ENCODE measurements at regions of chr15 and their contacts with region 1.

Region 1: GRCh38 chr15:39756806-39757522 is 25.7 kb downstream of the FSIP1 start:
- DNase-seq: peak; percentile 24
- H3K4me3 Mint-ChIP-seq: no peak overlapping the region
- H3K27ac Mint-ChIP-seq: no peak overlapping the region
- H3K4me1 Mint-ChIP-seq: no peaks in the 10 kb centered on the region
- H3K27me3 Mint-ChIP-seq: peaks cover 7% of the 10 kb centered on the region

Region 2: DNA sequence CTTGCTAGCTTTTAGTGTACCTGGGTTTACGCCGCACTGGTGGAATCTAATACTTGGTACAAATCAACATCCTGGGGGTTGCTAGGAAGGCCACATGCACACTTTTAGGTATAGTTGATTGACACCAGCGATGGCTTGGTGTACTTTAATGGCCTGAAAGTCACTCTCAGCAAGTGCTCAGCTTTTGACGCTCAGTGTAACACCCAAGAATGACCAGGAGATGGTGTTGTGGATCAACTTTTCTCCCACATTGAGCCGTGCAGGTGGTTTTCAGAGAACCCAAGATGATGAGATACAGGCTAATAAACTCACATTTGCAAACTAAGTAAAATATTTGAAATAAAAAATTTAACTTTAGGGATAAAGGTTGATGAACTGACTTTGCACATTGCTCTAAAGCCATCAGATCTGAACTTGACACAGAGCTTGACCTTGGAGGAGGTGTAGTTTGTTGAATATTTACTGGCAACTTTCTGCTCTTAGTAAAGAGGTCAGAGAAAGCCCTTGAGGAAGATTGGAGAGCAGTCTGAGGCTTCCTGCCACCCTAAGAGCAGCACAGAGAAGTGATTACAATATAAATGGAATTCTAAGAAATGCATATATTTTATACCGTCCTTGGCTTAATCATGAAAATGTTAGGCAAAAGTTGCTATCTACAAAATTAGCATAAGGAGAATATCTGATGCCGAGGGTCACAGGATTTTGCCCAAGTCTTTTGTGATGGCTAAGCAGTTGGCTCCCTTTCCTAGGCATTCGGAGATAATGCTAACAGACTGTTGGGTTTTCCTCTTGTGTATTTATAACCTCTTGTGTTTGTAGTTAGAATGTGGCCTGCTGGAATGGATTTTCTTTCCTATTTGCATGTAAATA is 1048.9 kb before region 1 on chr15:
- CTCF ChIA-PET with region 1: interaction called, 6 read pairs
- intact Hi-C with region 1: loop called (anchors 2 kb)
- DNase-seq: peak; percentile 53
- H3K4me3 Mint-ChIP-seq: no peak overlapping the region
- H3K27ac Mint-ChIP-seq: no peak overlapping the region
- H3K4me1 Mint-ChIP-seq: no peaks in the 10 kb centered on the region
- H3K27me3 Mint-ChIP-seq: no peaks in the 10 kb centered on the region

Region 3: GRCh38 chr15:39125904-39126303 is 631.1 kb before region 1 on chr15:
- CTCF ChIA-PET with region 1: interaction called, 4 read pairs
- intact Hi-C with region 1: loop called (anchors 2 kb)
- DNase-seq: peak; percentile 47
- H3K4me3 Mint-ChIP-seq: no peak overlapping the region
- H3K27ac Mint-ChIP-seq: no peak overlapping the region
- H3K4me1 Mint-ChIP-seq: no peaks in the 10 kb centered on the region
- H3K27me3 Mint-ChIP-seq: peaks cover 6% of the 10 kb centered on the region

Region 4: GRCh38 chr15:39495871-39496840 is 260.8 kb before region 1 on chr15:
- CTCF ChIA-PET with region 1: no interaction called
- intact Hi-C with region 1: no loop called
- DNase-seq: no peak
- H3K4me3 Mint-ChIP-seq: no peak overlapping the region
- H3K27ac Mint-ChIP-seq: no peak overlapping the region
- H3K4me1 Mint-ChIP-seq: no peaks in the 10 kb centered on the region
- H3K27me3 Mint-ChIP-seq: peaks cover 5% of the 10 kb centered on the region

Region 5: DNA sequence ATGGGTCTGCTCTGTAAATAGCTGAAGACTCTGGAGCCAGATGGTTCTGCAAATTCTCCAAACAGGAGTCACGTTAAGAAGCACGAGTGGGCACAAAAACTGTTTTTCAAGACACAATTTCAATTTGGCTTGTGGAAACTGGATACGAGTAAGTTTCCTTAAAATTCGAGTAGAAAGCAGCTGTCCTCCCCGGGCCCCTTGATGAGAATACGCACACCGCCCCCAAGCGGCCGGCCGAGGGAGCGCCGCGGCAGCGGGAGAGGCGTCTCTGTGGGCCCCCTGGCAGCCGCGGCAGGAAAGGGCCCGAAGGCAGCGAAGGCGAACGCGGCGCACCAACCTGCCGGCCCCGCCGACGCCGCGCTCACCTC is 176.9 kb before region 1 on chr15:
- CTCF ChIA-PET with region 1: interaction called, 11 read pairs
- intact Hi-C with region 1: loop called (anchors 1 kb)
- DNase-seq: peak; percentile 92
- H3K4me3 Mint-ChIP-seq: peak overlapping the region; percentile 44
- H3K27ac Mint-ChIP-seq: no peak overlapping the region
- H3K4me1 Mint-ChIP-seq: peaks cover 9% of the 10 kb centered on the region
- H3K27me3 Mint-ChIP-seq: peaks cover 50% of the 10 kb centered on the region

Region 6: DNA sequence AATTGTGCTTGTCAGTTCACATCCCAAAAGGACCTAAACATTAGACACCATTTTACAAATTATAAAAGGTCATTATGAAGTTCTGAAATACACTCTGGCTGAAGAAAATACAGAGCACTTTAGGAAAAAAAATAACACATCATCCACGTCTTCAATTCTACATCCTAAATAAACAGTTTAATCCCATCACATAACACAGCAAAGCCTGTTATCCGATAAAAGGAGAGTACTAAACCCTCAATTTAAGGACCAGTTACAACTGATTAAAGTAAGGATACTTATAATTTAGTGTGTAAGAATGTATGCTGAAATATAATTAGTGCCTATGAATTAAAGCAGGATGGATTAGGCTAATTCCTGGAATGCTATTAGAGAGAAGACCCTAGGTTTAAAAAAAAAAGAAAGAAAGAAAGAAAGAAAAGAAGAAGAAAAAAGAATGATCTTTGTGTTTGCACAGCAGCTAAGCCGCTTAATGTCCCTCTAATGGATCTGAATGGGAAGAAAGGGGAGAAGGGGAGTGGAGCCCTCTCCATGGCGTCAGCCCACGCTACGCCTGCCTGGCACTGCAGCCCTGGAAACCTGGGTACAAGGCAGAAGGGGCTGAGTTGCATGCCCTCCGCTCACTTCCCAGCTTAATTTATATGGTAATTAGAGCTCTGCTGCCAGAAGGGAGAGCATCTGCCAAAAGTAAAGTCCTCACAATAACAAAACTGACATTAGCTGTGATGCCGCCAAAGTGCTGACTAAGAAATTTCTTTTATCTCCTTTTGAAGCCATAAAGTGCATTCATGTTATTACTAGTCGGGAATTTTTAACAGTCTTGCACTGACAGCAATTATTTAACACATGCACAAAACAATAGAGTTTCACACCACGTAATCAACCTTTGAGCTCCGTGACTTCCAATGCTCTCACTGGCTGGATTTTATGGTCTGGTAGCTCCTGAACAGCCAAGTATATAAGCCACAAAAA is 64.3 kb before region 1 on chr15:
- CTCF ChIA-PET with region 1: interaction called, 95 read pairs
- intact Hi-C with region 1: no loop called
- DNase-seq: no peak
- H3K4me3 Mint-ChIP-seq: no peak overlapping the region
- H3K27ac Mint-ChIP-seq: no peak overlapping the region
- H3K4me1 Mint-ChIP-seq: no peaks in the 10 kb centered on the region
- H3K27me3 Mint-ChIP-seq: peaks cover 3% of the 10 kb centered on the region

Region 7: DNA sequence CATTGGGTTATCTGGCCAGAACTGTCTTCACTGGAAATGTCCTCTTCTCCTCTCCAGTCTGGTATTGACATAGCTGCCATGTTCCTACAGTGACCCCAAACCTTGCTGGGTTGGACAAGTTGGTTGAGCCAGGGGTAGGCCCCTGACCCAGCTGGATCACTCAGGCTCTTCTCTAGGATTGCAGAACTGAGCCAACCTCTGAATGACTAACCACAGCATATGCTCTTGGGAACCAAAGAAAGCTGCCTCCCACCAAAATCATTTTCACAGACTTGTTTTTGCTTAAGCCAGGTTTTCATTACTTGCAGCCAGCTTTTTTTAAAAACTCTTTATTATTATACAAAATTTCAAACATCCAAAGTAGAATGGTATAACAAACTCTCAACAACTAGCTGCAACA is 15.7 kb before region 1 on chr15:
- CTCF ChIA-PET with region 1: interaction called, 15 read pairs
- intact Hi-C with region 1: no loop called
- DNase-seq: no peak
- H3K4me3 Mint-ChIP-seq: no peak overlapping the region
- H3K27ac Mint-ChIP-seq: no peak overlapping the region
- H3K4me1 Mint-ChIP-seq: no peaks in the 10 kb centered on the region
- H3K27me3 Mint-ChIP-seq: peaks cover 1% of the 10 kb centered on the region

Measured in activated naive CD4-positive, alpha-beta T cell treated with anti-CD3 and anti-CD28 coated beads for 36 hours (primary cell).